ENCODE measurements at regions of chr5 and their contacts with region 1.

Region 1: DNA sequence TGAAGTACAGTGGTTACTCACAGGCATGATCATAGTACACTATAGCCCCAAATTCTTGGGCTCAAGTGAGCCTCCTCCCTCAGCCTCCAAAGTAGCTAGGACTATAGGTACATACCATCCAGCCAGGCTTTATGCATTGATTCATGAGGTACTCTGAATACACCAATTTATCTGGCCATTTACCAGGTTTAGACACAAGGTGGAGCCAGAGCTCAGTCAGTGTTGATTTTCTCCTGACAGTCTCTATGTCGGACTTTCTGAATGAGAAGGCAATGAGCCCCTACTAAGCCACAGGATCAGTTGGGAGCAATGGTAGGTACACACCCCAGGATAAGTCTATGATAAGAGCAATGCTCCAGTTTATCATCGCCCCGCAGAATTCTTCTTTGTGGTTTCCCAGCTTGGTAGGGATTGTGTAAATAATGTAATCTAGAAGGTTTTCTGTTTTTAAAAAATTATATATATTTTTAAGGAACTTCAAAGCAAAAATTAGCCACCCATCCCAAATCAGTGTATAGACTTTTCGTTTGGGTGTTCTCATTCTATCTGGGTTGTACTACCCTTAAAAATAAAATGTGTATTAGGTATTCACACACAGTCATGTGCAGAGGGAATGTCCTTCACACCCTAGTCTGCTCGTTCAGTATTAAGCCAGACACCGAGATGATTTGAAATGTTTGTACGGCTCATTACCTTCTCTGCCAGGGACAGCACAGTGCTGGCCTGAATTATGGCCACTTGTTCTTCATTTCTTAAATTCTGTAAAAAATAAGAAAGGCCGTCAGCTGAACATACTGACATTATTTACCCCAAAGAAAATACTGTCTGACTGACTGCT is 118.4 kb upstream of the DPYSL3 start:
- DNase-seq: peak; percentile 58
- H3K4me3 ChIP-seq: no peak overlapping the region; a peak in 1 of 4 replicates
- H3K27ac ChIP-seq: no peak overlapping the region
- H3K4me1 ChIP-seq: peaks cover 0 to 15% of the 10 kb centered on the region in 2 experiments; a peak in 1 of 4 replicates
- H3K27me3 ChIP-seq: no peaks in the 10 kb centered on the region
- CTCF ChIP-seq: peak; percentile 85
- EP300 ChIP-seq: no peak
- RAD21 ChIP-seq: peak; percentile 97

Region 2: GRCh38 chr5:147601652-147602051 is 26.6 kb before region 1 on chr5:
- CTCF ChIA-PET with region 1: interaction called, 10 read pairs
- POLR2A ChIA-PET with region 1: no interaction called
- DNase-seq: no peak
- H3K4me3 ChIP-seq: no peak overlapping the region
- H3K27ac ChIP-seq: no peak overlapping the region
- H3K4me1 ChIP-seq: no peaks in the 10 kb centered on the region
- H3K27me3 ChIP-seq: no peaks in the 10 kb centered on the region
- CTCF ChIP-seq: no peak
- EP300 ChIP-seq: no peak
- RAD21 ChIP-seq: no peak

Region 3: GRCh38 chr5:147782110-147783028 is 154.1 kb after region 1 on chr5 and contains the start of gene JAKMIP2:
- CTCF ChIA-PET with region 1: interaction called, 12 read pairs
- POLR2A ChIA-PET with region 1: interaction called, 3 read pairs
- DNase-seq: peak; percentile 88
- H3K4me3 ChIP-seq: peak within 1 kb of the TSS; percentile 69 to 70
- H3K27ac ChIP-seq: peak within 1 kb of the TSS; percentile 54 to 99
- H3K4me1 ChIP-seq: no peaks in the 10 kb centered on the region; a peak in 2 of 4 replicates
- H3K27me3 ChIP-seq: no peaks in the 10 kb centered on the region
- CTCF ChIP-seq: peak; percentile 22
- EP300 ChIP-seq: no peak; a peak in 1 of 4 replicates
- RAD21 ChIP-seq: peak; percentile 43
- polyA plus RNA-seq, gene JAKMIP2: 1.8 and 2.1 TPM in 2 replicates

Region 4: DNA sequence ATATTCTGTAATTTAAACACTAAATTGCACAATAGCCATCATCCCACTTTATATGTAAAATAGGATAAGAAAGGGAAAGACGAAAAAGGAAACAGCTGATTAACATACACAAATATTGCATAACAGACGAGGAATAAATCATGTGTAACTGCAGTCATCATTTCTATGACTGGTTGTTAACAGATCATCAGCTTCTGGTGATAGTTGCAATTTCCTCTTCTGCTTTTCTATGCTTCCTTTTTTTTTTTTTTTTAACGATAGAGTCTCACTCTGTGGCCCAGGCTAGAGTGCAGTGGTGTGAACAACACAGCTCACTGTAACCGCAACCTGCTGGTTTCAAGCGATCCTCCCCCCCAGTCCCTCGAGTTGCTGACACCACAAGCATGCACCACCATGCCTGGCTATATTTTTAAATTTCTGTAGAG is 176.8 kb after region 1 on chr5:
- CTCF ChIA-PET with region 1: interaction called, 18 read pairs
- POLR2A ChIA-PET with region 1: no interaction called
- DNase-seq: no peak
- H3K4me3 ChIP-seq: no peak overlapping the region
- H3K27ac ChIP-seq: no peak overlapping the region
- H3K4me1 ChIP-seq: peaks cover 0 to 11% of the 10 kb centered on the region in 2 experiments; a peak in 2 of 4 replicates
- H3K27me3 ChIP-seq: no peaks in the 10 kb centered on the region
- CTCF ChIP-seq: no peak
- EP300 ChIP-seq: no peak
- RAD21 ChIP-seq: no peak

Region 5: DNA sequence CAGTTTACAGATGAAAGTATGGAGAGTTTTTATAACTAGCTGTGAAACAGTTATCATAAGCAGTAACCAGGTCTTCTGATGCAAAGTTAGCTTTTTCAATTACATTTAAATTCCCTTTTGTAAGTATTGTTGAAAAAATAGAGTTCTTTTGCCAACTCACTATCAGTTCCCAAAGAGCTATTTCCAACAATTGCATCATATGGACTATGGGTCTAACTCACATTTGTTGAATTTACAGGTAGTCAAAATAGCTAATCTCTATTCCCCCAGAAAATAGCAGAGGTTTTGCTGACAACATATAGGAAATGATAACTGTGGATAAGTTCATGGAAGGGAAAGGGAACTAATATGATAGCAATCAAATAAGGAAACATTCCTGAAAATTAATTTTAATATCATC is 201.8 kb after region 1 on chr5:
- CTCF ChIA-PET with region 1: interaction called, 257 read pairs
- POLR2A ChIA-PET with region 1: no interaction called
- DNase-seq: no peak
- H3K4me3 ChIP-seq: no peak overlapping the region
- H3K27ac ChIP-seq: no peak overlapping the region
- H3K4me1 ChIP-seq: no peaks in the 10 kb centered on the region; a peak in 1 of 4 replicates
- H3K27me3 ChIP-seq: no peaks in the 10 kb centered on the region
- CTCF ChIP-seq: no peak
- EP300 ChIP-seq: no peak
- RAD21 ChIP-seq: no peak